Activated T-helper 2 cell treated with anti-CD3 and anti-CD28 coated beads, Interferon-gamma antibody, Interleukin-2, Interleukin-4, amounts not matched to agents 10 μg/mL and 5 μg/mL and 100 μg/mL, durations not matched to agents 14 hours and 24 hours and 36 hours (primary cell): ENCODE measurements at regions of chr5 and their contacts with region 1.

Region 1: GRCh38 chr5:143016777-143017516 is 246.8 kb downstream of the ARHGAP26 start:
- DNase-seq: no peak
- H3K4me3 Mint-ChIP-seq: no peak overlapping the region
- H3K27ac Mint-ChIP-seq: no peak overlapping the region
- H3K4me1 Mint-ChIP-seq: peaks cover 52% of the 10 kb centered on the region
- H3K27me3 Mint-ChIP-seq: no peaks in the 10 kb centered on the region

Region 2: DNA sequence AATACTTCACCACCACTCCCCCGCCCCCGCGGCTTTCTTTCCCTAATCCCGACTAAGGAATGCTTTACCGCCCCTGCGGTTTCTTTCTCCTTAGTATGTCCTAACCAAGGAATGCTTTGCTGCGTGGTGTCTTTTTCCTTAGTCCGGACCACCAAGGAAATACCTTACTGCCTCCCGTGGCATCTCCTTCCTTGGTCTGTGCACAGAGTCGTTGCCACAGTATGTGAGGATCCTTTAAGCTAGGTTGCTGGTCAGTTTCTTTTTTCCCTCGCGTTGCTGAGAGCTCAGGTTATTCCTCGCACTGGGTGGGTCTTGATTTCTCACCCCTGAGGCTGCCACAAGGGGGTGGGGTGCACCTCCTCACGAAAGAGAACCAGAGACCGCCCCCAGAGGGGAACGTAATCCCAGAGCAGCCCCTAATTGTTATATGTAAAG is 77.2 kb after region 1 on chr5:
- intact Hi-C with region 1: loop called (anchors 2 kb)
- DNase-seq: no peak
- H3K4me3 Mint-ChIP-seq: peak overlapping the region; percentile 9
- H3K27ac Mint-ChIP-seq: peak overlapping the region; percentile 79
- H3K4me1 Mint-ChIP-seq: peaks cover 29% of the 10 kb centered on the region
- H3K27me3 Mint-ChIP-seq: no peaks in the 10 kb centered on the region